ENCODE measurements at regions of chr13 and their contacts with region 1.

Region 1: GRCh38 chr13:78978381-78978998 is 319.5 kb upstream of the OBI1 start:
- DNase-seq: no peak
- H3K4me3 ChIP-seq: no peak overlapping the region
- H3K27ac ChIP-seq: no peak overlapping the region
- H3K4me1 ChIP-seq: no peaks in the 10 kb centered on the region
- H3K27me3 ChIP-seq: no peaks in the 10 kb centered on the region
- CTCF ChIP-seq: peak; percentile 36 to 68 (median 57)
- EP300 ChIP-seq: no peak
- POLR2A ChIP-seq: no peak

Region 2: GRCh38 chr13:78137404-78138142 is 840.9 kb before region 1 on chr13:
- intact Hi-C with region 1: loop called (anchors 2 kb)
- DNase-seq: no peak
- H3K4me3 ChIP-seq: peak overlapping the region in 1 of 4 donors; percentile 8
- H3K27ac ChIP-seq: no peak overlapping the region
- H3K4me1 ChIP-seq: peaks cover 0 to 5% (median 2%) of the 10 kb centered on the region in 4 donors
- H3K27me3 ChIP-seq: no peaks in the 10 kb centered on the region
- CTCF ChIP-seq: peak; percentile 49 to 74 (median 65)
- EP300 ChIP-seq: no peak
- POLR2A ChIP-seq: no peak

Region 3: DNA sequence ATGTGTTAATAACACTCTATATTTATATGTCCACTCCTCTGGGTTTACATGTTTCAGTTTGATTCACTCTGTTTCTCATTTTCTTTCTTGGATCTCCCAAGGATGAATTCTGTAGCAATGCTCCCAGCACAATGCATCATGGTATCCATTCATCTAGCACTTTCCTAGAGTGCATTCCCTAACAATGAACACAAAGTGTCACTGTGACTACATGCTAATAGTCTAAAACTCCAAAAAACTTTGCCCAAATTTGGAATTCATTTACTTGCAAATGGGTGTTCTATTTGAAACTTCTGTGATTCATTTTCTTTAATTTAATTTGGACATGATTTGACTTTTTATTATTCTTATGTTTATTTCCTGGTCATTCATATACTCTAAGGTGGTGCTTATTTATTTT is 661.5 kb before region 1 on chr13:
- intact Hi-C with region 1: loop called (anchors 10 kb)
- DNase-seq: no peak
- H3K4me3 ChIP-seq: no peak overlapping the region
- H3K27ac ChIP-seq: no peak overlapping the region
- H3K4me1 ChIP-seq: no peaks in the 10 kb centered on the region
- H3K27me3 ChIP-seq: no peaks in the 10 kb centered on the region
- CTCF ChIP-seq: peak in 1 of 3 experiments; percentile 34
- EP300 ChIP-seq: no peak
- POLR2A ChIP-seq: no peak

Measured in esophagus muscularis mucosa (tissue), 4 donors.